ENCODE measurements at regions of chr16 and their contacts with region 1.

Region 1: GRCh38 chr16:11915644-11916523 is at the start of gene GSPT1:
- DNase-seq: peak; percentile 98
- H3K4me3 ChIP-seq: peak within 1 kb of the TSS; percentile 90 to 94
- H3K27ac ChIP-seq: peak within 1 kb of the TSS; percentile 90 to 97
- H3K4me1 ChIP-seq: peaks cover 2% of the 10 kb centered on the region
- H3K27me3 ChIP-seq: no peaks in the 10 kb centered on the region
- CTCF ChIP-seq: peak in 2 of 4 experiments; percentile 60 to 67
- POLR2A ChIP-seq: peak; percentile 93
- total RNA-seq, gene GSPT1: 70.2 to 88.7 TPM

Region 2: GRCh38 chr16:10944249-10945064 is 971.4 kb before region 1 on chr16 and contains the start of gene CLEC16A:
- intact Hi-C with region 1: loop called (anchors 10 kb)
- DNase-seq: peak; percentile 96
- H3K4me3 ChIP-seq: peak within 1 kb of the TSS; percentile 83 to 90
- H3K27ac ChIP-seq: peak within 1 kb of the TSS; percentile 56 to 81
- H3K4me1 ChIP-seq: peaks cover 15% of the 10 kb centered on the region
- H3K27me3 ChIP-seq: no peaks in the 10 kb centered on the region
- CTCF ChIP-seq: peak in 3 of 4 experiments; percentile 17 to 74 (median 61)
- POLR2A ChIP-seq: peak; percentile 80
- total RNA-seq, gene CLEC16A: 26.1 to 52.2 TPM

Measured in prostate gland (tissue), 2 donors.